ENCODE measurements at regions of chr19 and their contacts with region 1.

Region 1: DNA sequence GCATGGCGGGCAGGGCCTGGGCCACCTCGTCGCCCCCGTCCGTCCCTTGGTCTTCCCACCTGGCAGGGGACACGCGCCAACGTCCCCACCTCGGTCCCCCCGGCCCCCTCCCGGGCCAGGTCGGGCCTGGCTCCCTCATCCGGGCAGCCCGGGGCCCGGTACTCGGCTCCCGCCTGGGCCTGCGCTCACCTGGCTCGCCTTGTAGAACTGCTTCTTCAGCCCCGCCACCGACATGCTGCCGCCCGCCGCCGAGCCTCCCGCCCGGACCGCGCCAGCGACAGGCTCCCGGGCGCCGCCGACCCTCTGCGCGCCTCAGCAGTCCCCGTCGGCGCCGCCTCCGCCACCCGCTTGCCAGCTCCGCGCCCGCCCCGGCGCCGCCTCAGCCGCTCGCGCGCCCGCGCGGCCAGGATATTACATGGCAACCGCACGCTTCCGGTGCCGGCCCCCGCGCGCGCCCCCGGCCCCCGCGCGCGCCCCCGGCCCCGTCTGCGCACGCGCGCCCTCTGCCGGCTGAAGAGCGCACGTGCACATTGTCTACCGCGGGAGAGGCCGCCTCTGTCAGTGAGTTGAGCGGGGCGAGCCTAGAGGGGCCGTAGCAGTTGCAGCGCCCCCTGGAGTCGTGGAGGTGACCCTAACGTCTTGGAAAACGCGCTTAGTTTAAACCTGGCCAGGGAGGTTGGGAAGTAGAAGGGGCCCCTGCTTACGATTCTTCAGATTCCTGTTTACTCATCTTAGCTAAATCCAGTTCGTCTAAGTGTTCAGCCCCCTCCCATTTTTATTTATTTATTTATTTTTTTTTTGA is at the start of gene SH3GL1:
- DNase-seq: peak; percentile 82
- ATAC-seq: peak; percentile 64
- H3K4me3 ChIP-seq: peak within 1 kb of the TSS; percentile 97 to 99 (median 97)
- H3K27ac ChIP-seq: peak within 1 kb of the TSS; percentile 84
- H3K4me1 ChIP-seq: peaks cover 69% of the 10 kb centered on the region
- H3K27me3 ChIP-seq: no peaks in the 10 kb centered on the region; a peak in 1 of 5 replicates
- CTCF ChIP-seq: peak; percentile 95
- EP300 ChIP-seq: peak in 1 of 2 experiments; percentile 52; a peak in 1 of 4 replicates
- POLR2A ChIP-seq: peak in 1 of 2 experiments; percentile 51; a peak in 1 of 4 replicates
- RAD21 ChIP-seq: peak; percentile 85; the same call in 1 of the 2 replicates
- total RNA-seq, gene SH3GL1: 26.7 and 33.0 TPM in 2 replicates

Region 2: GRCh38 chr19:4267101-4267900 is 133.0 kb before region 1 on chr19:
- CTCF ChIA-PET with region 1: interaction called, 6 read pairs
- POLR2A ChIA-PET with region 1: no interaction called
- in situ Hi-C with region 1: no loop called
- intact Hi-C with region 1: loop called (anchors 5 kb)
- DNase-seq: peak; percentile 72
- ATAC-seq: peak; percentile 88
- H3K4me3 ChIP-seq: no peak overlapping the region
- H3K27ac ChIP-seq: peak overlapping the region; percentile 73
- H3K4me1 ChIP-seq: peaks cover 20% of the 10 kb centered on the region
- H3K27me3 ChIP-seq: no peaks in the 10 kb centered on the region
- CTCF ChIP-seq: peak; percentile 90
- EP300 ChIP-seq: no peak
- POLR2A ChIP-seq: no peak
- RAD21 ChIP-seq: peak; percentile 72

Region 3: DNA sequence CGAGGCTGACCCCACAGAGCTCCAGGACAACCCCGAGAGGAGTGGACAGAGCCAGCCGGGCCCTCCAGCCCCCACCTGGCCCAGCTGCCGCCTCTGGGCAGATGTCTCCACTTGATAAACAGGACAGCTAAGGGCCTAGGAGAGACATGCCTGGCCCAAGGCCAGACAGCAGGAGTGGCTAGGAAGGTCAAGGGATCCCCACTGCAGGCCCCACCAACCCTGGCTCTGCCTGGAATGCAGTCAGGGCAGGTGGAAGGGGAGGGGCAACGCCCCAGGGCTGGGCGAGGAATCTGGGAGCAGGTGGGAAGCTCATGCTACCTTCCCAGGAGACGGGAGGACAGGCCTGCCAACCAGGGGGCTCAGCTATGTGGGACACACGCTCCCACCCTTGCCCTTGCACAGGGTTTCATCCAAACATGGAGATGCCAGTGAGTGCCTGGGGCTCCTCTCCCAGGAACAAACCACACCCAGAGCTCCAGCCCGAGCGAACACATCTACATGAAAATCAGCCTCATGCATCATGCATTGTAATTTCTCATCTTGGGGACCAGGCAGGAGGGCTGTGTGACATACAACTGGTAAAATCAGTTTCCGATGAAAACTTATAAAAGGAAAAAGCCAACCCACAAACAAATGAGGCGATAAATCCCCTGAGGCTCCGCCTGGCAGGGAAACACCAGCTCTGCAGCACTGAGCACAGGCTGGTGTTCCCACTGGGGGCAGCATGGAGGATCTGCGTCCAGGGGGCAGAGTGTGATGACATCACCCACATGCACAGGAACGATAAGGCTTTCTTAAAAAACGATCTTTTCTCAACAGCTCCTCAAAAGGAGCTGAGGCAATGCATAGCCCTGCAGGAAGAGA is 24.9 kb before region 1 on chr19:
- CTCF ChIA-PET with region 1: interaction called, 27 read pairs
- POLR2A ChIA-PET with region 1: interaction called, 10 read pairs
- in situ Hi-C with region 1: no loop called
- intact Hi-C with region 1: no loop called
- DNase-seq: peak; percentile 75
- ATAC-seq: peak; percentile 61
- H3K4me3 ChIP-seq: peak overlapping the region in 1 of 3 experiments; percentile 53; a peak in 2 of 6 replicates
- H3K27ac ChIP-seq: peak overlapping the region; percentile 84
- H3K4me1 ChIP-seq: peaks cover 42% of the 10 kb centered on the region
- H3K27me3 ChIP-seq: no peaks in the 10 kb centered on the region
- CTCF ChIP-seq: peak; percentile 45
- EP300 ChIP-seq: no peak
- POLR2A ChIP-seq: no peak
- RAD21 ChIP-seq: no peak

Region 4: DNA sequence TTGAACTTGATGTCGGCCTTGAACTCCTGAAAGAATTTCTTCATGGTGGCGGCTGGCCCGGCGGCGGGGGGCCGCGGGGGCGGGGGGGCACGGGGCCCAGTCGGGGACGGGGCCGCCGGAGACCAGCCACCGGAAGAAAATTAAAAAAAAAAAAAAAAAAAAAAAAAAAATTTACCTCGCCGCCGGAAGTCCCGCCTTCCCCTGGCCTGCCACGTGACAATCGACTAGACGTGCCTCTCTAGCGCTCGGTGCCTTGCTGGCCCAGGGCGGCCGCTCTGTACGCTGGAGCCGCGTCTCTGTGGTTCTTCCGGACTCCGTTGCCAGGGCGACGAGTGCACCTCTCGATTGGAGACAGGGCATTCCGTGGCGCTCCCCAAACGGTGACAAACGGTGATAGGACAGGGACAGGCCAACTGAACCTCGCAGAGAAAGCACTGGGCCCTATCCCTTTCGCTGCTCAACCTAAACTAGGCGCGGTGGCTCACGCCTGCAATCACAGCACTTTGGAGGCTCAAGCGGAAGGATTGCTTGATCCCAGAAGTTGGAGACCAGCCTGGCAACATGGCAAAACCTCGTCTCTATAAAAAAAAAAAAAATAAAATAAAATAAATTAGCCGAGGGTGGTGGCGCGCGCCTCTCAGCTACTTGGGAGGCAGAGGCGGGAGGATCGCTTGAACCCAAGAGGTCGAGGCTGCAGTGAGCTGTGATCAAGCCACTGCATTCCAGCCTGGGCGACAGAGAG is 57.5 kb after region 1 on chr19 and contains the start of gene UBXN6:
- CTCF ChIA-PET with region 1: no interaction called
- POLR2A ChIA-PET with region 1: interaction called, 3 read pairs
- in situ Hi-C with region 1: no loop called
- intact Hi-C with region 1: loop called (anchors 5 kb)
- DNase-seq: peak; percentile 95
- ATAC-seq: peak; percentile 80
- H3K4me3 ChIP-seq: peak within 1 kb of the TSS; percentile 72 to 92 (median 85)
- H3K27ac ChIP-seq: peak within 1 kb of the TSS; percentile 74
- H3K4me1 ChIP-seq: peaks cover 16% of the 10 kb centered on the region
- H3K27me3 ChIP-seq: no peaks in the 10 kb centered on the region; a peak in 1 of 5 replicates
- CTCF ChIP-seq: 0 out of 2 replicates have a peak, but pooled peaks have one; percentile 16
- EP300 ChIP-seq: peak in 1 of 2 experiments; percentile 60; a peak in 1 of 4 replicates
- POLR2A ChIP-seq: no peak
- RAD21 ChIP-seq: no peak
- total RNA-seq, gene UBXN6: 33.6 and 35.5 TPM in 2 replicates

Region 5: DNA sequence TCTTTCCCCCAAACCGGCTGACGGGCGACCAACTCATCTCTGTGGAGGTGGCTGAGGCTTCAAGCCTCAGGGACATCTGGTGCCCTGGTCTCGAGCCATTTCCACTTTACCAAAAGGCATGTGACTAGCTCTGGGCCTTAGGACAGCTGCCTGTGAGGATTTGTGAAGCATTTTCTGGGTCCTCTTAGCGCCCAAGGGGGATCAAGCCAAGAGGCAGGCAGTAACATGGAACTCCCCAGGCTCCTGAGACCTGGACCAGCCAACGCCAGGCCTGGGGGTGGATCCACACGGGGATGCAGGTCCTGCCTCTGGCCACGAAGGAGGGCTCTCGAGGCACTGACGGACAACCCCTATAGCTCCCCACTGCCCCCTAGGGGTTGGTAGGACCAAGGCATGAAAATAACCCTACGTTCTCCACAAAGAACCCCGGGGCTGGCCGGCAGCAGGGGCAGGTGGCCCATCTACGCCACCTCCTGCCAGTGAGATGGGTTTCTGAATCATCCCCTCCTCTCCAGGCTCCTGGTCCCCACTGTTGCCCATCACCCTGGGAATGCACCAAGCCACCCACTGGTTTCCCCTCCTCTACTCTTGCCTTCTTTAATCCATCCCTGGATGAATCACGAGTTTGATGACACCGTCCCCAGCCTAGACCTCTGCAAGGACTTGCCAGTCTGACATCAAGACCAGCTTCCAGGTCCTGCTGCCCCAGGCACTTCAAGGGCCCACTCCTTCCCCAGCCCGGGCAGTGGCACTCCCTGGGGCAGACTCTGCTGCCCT is 276.8 kb after region 1 on chr19:
- CTCF ChIA-PET with region 1: no interaction called
- POLR2A ChIA-PET with region 1: no interaction called
- in situ Hi-C with region 1: no loop called
- intact Hi-C with region 1: no loop called
- DNase-seq: peak; percentile 69
- ATAC-seq: peak; percentile 77
- H3K4me3 ChIP-seq: no peak overlapping the region
- H3K27ac ChIP-seq: no peak overlapping the region
- H3K4me1 ChIP-seq: no peaks in the 10 kb centered on the region; the same call in 1 of the 2 replicates
- H3K27me3 ChIP-seq: no peaks in the 10 kb centered on the region
- CTCF ChIP-seq: peak; percentile 70
- EP300 ChIP-seq: no peak
- POLR2A ChIP-seq: no peak
- RAD21 ChIP-seq: 0 out of 2 replicates have a peak, but pooled peaks have one; percentile 59